Activated CD4-positive, alpha-beta T cell treated with anti-CD3 and anti-CD28 coated beads, Interleukin-2, amount 10 ng/mL, durations not matched to agents 7 days and 5 days (primary cell): ENCODE measurements at regions of chr15 and their contacts with region 1.

Region 1: DNA sequence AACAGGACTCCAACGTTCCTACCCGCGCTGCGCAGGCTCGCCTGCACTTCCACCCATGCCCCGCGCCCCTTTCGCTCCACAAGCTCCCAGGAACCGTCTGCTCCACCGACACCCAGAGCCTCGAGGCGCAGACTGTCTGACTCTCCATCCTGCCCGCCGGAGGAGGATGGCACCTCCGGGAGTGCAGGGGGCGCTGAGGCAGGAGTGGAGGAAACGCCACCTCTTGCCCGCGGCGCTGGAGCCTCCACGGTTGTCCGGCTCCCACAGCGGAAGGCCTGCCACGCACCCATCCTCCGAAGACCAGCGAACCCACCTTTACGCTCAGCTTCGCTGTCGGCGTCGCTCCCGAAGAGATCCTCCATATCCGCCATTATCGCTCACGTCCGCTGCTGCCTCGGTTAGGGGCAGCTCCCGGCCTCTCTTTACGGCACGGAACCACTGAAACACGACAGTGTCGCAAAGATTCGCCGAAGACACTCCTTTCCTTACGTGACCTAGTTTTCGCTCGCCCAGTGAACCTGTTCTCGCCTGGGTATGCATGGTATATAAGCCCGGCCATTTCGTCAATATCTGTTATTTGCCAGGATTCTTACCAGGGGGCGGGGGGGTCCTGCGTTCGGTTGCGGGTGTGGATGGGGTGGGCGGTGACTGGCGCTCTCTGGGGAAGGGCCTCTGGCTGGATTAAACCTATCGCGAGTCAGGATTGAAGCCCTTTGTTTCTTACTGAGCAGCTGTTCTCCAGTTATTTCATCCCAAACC is at the start of gene LEO1:
- DNase-seq: peak; percentile 95
- H3K4me3 Mint-ChIP-seq: peak within 1 kb of the TSS; percentile 92
- H3K27ac Mint-ChIP-seq: peak within 1 kb of the TSS; percentile 91
- H3K4me1 Mint-ChIP-seq: peaks cover 26% of the 10 kb centered on the region
- H3K27me3 Mint-ChIP-seq: no peaks in the 10 kb centered on the region
- total RNA-seq, gene LEO1: 32.0 to 34.4 TPM

Region 2: DNA sequence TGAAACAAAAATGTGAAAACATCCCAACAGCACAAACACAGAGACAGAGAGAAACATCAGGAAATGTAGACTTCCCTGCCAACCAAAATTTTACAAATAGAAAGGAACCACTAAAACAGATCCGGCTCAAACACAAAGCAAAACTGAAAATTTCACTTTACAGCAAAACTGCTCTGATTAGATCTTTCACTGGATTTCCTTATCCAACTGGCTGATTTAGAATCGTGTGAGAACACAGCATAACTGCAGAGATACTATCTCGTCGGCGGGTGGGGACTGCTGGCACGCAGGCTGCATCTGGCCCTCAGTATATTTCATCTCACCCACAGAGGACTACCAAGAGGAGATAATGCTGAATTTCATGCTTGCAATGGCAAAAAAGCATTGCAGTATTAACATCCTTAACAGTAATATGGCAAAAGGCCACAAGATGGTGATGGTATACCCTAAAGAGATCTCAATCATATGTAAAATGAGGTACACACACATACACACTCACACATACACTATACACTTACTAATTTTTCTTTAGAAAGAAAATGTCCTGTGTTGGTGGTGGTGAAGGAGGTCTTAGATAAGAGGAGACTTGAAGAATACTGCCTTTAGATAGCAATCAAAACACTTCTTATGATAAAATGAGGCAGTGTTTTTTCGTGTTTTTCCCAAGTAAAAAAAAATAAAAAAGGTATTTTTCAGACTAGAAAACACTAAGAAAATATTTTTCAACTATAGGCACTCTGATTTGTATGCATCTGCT is 10.6 kb after region 1 on chr15:
- CTCF ChIA-PET with region 1: interaction called, 8 read pairs
- POLR2A ChIA-PET with region 1: interaction called, 13 read pairs
- DNase-seq: peak; percentile 84
- H3K4me3 Mint-ChIP-seq: peak overlapping the region; percentile 74
- H3K27ac Mint-ChIP-seq: peak overlapping the region; percentile 93
- H3K4me1 Mint-ChIP-seq: peaks cover 24% of the 10 kb centered on the region
- H3K27me3 Mint-ChIP-seq: no peaks in the 10 kb centered on the region